B cell (primary cell): ENCODE measurements at regions of chr1 and their contacts with region 1.

Region 1: DNA sequence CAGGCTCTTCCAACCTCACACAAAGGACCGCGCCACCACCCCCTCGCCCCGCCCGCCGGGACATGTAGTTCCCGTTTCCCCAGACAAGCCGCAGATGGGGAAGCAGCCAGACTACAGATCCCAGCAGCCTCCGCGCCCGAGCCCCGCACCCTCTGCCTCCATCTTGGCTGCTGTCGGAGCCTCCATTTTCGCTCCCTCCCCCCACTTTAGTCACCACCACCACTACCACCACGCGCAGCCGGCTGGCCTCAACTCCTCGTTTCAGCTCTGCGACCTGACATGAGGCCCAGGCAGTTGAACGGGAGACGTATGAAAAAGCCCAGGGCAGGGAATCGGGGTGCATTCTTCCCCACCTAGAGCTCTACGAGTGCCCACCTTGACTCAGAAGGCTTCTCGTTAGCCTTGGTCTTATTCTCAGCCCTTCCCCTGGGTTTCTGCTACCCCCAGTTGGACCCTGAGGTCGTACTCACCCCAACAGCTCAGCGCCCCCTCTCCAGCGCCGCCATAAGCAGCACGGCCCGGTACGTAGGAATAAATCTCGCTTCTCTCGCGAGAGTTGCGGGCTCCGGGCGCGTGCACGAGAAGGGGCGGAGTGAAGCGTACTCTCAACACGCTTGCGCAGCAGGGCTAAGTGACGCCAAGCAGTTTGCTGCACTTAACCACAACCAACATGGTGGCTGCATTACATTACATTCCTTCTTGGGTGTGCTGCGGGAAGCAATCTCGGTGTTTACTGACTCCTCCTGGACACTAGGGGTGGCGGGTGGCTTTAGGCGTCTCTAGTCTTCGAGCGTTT is at the start of gene CSDE1:
- DNase-seq: peak; percentile 98
- ATAC-seq: peak; percentile 89
- H3K4me3 ChIP-seq: peak within 1 kb of the TSS; percentile 81 to 100 (median 100)
- H3K4me3 Mint-ChIP-seq: peak within 1 kb of the TSS; percentile 100
- H3K27ac ChIP-seq: peak within 1 kb of the TSS; percentile 99 to 100
- H3K27ac Mint-ChIP-seq: peak within 1 kb of the TSS; percentile 100
- H3K4me1 ChIP-seq: peaks cover 45 to 46% of the 10 kb centered on the region in 2 donors
- H3K4me1 Mint-ChIP-seq: peaks cover 56% of the 10 kb centered on the region
- H3K27me3 ChIP-seq: no peaks in the 10 kb centered on the region
- H3K27me3 Mint-ChIP-seq: no peaks in the 10 kb centered on the region
- CTCF ChIP-seq: no peak
- total RNA-seq, gene CSDE1: 443 and 454 TPM in 2 replicates

Region 2: DNA sequence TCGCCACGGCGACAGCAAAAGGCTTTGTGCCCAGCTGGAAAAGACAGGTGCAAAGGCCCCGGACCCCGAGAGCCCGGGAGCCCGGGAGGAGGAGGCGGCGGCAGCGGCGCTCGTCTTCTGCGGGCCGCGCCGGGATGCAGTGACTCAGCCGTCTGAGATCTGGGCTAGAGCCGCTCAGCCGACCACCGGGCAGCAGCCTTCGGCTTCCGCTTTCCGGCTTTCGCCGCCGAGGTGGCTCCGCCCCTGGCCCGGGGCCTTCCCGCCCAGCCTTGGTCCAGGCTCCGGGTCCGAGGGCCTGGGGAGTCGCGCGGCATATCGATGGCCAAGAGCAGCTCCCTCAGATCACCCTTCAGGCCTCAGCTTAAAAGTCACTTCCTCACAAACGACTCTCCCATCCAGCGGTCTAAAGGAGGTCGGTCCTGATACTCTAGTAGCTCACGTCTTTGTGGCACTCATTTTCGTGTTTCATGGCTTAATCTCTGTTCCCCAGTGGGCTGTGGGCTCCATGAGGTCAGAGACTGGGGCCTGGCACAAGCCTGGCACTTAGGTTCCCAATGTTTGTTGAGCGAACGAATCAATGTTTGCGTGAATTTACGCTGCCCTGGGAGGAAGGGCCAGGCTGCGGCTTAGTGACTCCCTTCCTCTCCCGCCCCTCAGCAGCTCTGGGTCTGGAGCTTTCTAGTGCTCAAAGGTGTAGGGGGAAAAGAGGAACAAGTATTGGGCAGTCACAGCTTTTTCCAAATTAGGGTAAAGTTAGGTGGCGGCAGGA is 998.1 kb before region 1 on chr1 and contains the start of gene PHTF1:
- CTCF ChIA-PET with region 1: no interaction called
- POLR2A ChIA-PET with region 1: no interaction called
- intact Hi-C with region 1: loop called (anchors 2 kb)
- DNase-seq: peak; percentile 80
- ATAC-seq: peak; percentile 84
- H3K4me3 ChIP-seq: peak within 1 kb of the TSS; percentile 76 to 93 (median 92)
- H3K4me3 Mint-ChIP-seq: peak within 1 kb of the TSS; percentile 99
- H3K27ac ChIP-seq: peak within 1 kb of the TSS; percentile 86 to 90
- H3K27ac Mint-ChIP-seq: peak within 1 kb of the TSS; percentile 99
- H3K4me1 ChIP-seq: peaks cover 6 to 20% of the 10 kb centered on the region in 2 donors
- H3K4me1 Mint-ChIP-seq: peaks cover 23% of the 10 kb centered on the region
- H3K27me3 ChIP-seq: no peaks in the 10 kb centered on the region
- H3K27me3 Mint-ChIP-seq: no peaks in the 10 kb centered on the region
- CTCF ChIP-seq: no peak
- total RNA-seq, gene PHTF1: 18.5 and 25.7 TPM in 2 replicates

Region 3: GRCh38 chr1:113874012-113874879 is 883.4 kb before region 1 on chr1:
- CTCF ChIA-PET with region 1: no interaction called
- POLR2A ChIA-PET with region 1: no interaction called
- intact Hi-C with region 1: no loop called
- DNase-seq: peak; percentile 23
- ATAC-seq: no peak
- H3K4me3 ChIP-seq: no peak overlapping the region
- H3K4me3 Mint-ChIP-seq: no peak overlapping the region
- H3K27ac ChIP-seq: peak overlapping the region in 1 of 2 donors; percentile 20
- H3K27ac Mint-ChIP-seq: peak overlapping the region; percentile 28
- H3K4me1 ChIP-seq: peaks cover 34 to 38% of the 10 kb centered on the region in 2 donors
- H3K4me1 Mint-ChIP-seq: peaks cover 45% of the 10 kb centered on the region
- H3K27me3 ChIP-seq: no peaks in the 10 kb centered on the region
- H3K27me3 Mint-ChIP-seq: no peaks in the 10 kb centered on the region
- CTCF ChIP-seq: no peak

Region 4: DNA sequence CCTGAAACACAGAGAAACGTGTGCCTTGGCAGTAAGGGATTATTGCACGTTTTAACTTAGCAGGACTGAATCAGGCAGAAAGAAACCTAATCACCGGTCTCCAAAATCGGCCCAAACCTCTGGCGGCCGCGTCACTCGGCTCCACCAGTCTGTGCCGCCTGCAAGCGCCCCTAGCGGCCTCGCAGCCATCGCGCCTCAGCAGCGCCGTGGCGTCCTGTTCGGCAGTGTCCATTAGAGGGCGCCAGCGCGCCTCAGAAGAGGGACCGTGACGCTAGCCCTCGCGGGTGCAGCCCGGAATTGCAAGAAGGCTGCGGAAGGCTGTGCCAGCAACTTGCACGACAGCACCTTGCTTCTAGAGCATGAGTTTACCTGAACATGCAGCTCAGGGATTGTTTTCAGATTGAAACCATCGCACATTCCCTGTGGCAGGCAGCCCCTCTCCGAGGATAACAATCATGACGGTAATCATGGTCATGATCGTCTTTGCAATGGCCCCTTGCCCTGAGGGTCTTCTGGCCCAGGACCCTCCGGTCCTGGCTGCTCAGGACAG is 411.1 kb before region 1 on chr1:
- CTCF ChIA-PET with region 1: no interaction called
- POLR2A ChIA-PET with region 1: no interaction called
- intact Hi-C with region 1: loop called (anchors 2 kb)
- DNase-seq: peak; percentile 98
- ATAC-seq: peak; percentile 100
- H3K4me3 ChIP-seq: peak overlapping the region; percentile 24 to 61 (median 53)
- H3K4me3 Mint-ChIP-seq: peak overlapping the region; percentile 97
- H3K27ac ChIP-seq: no peak overlapping the region
- H3K27ac Mint-ChIP-seq: peak overlapping the region; percentile 62
- H3K4me1 ChIP-seq: peaks cover 0 to 13% of the 10 kb centered on the region in 2 donors
- H3K4me1 Mint-ChIP-seq: peaks cover 10% of the 10 kb centered on the region
- H3K27me3 ChIP-seq: peaks cover 0 to 3% (median under 1%) of the 10 kb centered on the region in 4 experiments
- H3K27me3 Mint-ChIP-seq: peaks cover 14% of the 10 kb centered on the region
- CTCF ChIP-seq: peak; percentile 100

Region 5: DNA sequence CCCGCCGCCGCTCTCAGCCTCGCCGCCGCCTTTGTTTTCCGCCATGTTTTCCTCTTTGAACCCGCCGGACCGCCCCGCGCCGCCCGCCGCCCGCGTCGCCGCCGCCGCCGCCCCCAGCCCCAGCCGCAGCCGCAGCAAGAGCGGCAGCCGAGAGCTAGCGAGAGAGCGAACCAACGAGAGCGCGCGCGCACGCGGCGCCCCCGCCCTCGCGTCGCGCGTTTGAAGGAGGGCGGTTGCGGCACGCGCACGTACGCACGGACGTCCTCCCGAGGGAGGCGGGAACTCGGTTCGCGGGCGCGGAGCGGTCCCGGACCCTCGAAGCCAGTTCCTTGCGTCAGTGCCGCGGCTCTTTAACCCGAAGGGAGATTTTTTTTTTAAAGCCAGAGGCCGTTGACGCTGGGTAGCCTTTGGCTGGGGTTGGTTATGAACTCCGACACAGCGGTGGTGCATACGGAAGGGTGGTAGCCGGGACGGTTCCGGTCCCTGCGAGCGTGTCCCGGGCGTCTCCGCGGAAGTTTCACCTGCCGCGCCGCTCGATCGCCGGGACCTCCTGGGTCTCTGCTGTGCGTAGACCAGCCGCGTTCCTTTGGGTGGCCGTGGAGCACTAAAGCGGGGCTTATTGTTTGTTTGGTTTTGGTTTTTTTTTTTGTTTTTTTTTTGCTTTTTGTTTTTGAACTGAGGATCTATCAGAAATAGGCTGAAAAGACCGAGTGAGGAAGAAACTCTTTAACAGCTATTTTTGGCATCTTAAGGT is 246.4 kb before region 1 on chr1 and contains the start of gene TRIM33:
- CTCF ChIA-PET with region 1: no interaction called
- POLR2A ChIA-PET with region 1: interaction called, 16 read pairs
- intact Hi-C with region 1: loop called (anchors 1 kb)
- DNase-seq: peak; percentile 97
- ATAC-seq: peak; percentile 75
- H3K4me3 ChIP-seq: peak within 1 kb of the TSS; percentile 67 to 98 (median 95)
- H3K4me3 Mint-ChIP-seq: peak within 1 kb of the TSS; percentile 91
- H3K27ac ChIP-seq: peak within 1 kb of the TSS; percentile 98 to 100
- H3K27ac Mint-ChIP-seq: peak within 1 kb of the TSS; percentile 98
- H3K4me1 ChIP-seq: peaks cover 36 to 41% of the 10 kb centered on the region in 2 donors
- H3K4me1 Mint-ChIP-seq: peaks cover 50% of the 10 kb centered on the region
- H3K27me3 ChIP-seq: no peaks in the 10 kb centered on the region
- H3K27me3 Mint-ChIP-seq: no peaks in the 10 kb centered on the region
- CTCF ChIP-seq: no peak
- total RNA-seq, gene TRIM33: 61.0 and 67.3 TPM in 2 replicates

Region 6: DNA sequence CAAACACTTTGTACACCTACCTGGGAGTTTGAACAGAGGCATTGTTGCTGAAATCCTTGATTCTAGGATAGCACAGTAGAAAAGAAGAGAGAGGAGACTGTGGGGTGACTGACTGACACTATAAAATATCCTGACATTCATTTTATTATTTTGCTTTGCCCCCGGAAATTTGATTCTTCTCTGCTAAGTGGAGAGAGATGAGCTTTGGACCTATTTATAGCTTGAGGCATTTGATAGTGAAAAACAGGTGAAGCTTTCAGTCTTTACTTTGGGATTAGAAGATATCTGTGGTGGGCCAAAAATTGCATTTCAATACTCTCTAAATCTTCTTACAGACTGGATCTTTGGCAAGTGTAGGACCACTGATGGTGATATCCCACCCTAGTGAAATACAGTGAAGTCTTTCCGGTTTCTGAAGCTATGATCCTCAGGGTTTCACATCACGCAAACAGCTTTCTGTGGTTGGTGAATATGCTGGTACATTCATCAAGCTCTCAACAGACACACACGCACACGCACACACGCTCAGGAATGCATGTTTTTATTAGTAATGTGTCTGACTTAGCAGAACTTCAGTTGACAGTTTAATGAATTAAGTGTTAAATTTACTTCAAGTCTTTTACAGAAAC is 62.1 kb before region 1 on chr1 and contains the start of gene AMPD1:
- CTCF ChIA-PET with region 1: no interaction called
- POLR2A ChIA-PET with region 1: no interaction called
- intact Hi-C with region 1: no loop called
- DNase-seq: no peak
- ATAC-seq: no peak
- H3K4me3 ChIP-seq: no peak within 1 kb of the TSS
- H3K4me3 Mint-ChIP-seq: no peak within 1 kb of the TSS
- H3K27ac ChIP-seq: no peak within 1 kb of the TSS
- H3K27ac Mint-ChIP-seq: no peak within 1 kb of the TSS
- H3K4me1 ChIP-seq: no peaks in the 10 kb centered on the region
- H3K4me1 Mint-ChIP-seq: no peaks in the 10 kb centered on the region
- H3K27me3 ChIP-seq: peaks cover 0 to 3% (median 0%) of the 10 kb centered on the region in 4 experiments
- H3K27me3 Mint-ChIP-seq: peaks cover 28% of the 10 kb centered on the region
- CTCF ChIP-seq: no peak
- total RNA-seq, gene AMPD1: not detected in 2 replicates

Region 7: GRCh38 chr1:114716304-114717170 is 41.1 kb before region 1 on chr1 and contains the start of gene NRAS:
- CTCF ChIA-PET with region 1: interaction called, 4 read pairs
- POLR2A ChIA-PET with region 1: interaction called, 5 read pairs
- intact Hi-C with region 1: loop called (anchors 1 kb)
- DNase-seq: peak; percentile 96
- ATAC-seq: peak; percentile 96
- H3K4me3 ChIP-seq: peak within 1 kb of the TSS; percentile 69 to 95 (median 89)
- H3K4me3 Mint-ChIP-seq: peak within 1 kb of the TSS; percentile 99
- H3K27ac ChIP-seq: peak within 1 kb of the TSS; percentile 97
- H3K27ac Mint-ChIP-seq: peak within 1 kb of the TSS; percentile 99
- H3K4me1 ChIP-seq: peaks cover 15 to 16% of the 10 kb centered on the region in 2 donors
- H3K4me1 Mint-ChIP-seq: peaks cover 29% of the 10 kb centered on the region
- H3K27me3 ChIP-seq: no peaks in the 10 kb centered on the region
- H3K27me3 Mint-ChIP-seq: no peaks in the 10 kb centered on the region
- CTCF ChIP-seq: no peak
- total RNA-seq, gene NRAS: 35.0 and 35.3 TPM in 2 replicates

Region 8: DNA sequence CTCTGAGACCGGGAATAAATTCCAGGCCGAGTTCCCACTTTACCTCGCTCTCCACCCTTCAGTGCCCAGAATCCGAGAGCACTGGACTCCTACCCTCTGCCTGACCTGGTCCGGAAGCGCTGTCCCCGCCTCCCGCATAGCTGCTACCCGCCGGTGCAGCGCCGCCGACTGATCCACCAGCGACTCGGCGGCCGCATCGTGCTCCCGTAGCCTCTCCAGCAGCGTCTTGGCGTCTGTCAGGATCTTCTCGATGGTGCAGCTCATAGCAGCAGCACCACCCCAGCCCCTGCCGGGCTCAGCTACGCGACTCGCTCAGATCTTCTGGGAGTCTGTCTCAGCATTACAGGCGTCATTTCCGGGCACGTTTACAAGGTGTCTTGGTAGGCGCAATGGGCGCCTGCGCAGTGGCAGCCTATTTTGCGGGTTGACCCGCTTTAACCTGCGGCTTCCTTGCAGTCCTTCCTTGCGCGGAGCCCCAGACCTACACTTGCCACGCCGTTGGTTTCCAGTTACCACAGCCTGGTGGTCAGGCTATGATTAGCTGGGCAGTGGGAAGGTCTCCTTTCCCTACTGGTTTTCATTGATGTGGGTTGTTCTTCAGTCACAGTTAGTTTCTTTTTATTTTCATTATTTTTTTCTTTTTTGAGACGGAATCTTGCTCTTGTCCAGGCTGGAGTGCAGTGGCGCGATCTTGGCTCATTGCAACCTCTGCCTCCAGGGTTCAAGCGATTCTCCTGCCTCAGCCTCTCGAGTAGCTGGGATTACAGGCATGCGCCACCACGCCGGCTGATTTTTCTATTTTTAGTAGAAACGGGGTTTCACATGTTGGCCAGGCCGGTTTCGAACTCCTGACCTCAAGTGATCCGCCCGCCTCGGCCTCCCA is 22.9 kb after region 1 on chr1 and contains the start of gene SIKE1:
- CTCF ChIA-PET with region 1: interaction called, 3 read pairs
- POLR2A ChIA-PET with region 1: interaction called, 6 read pairs
- intact Hi-C with region 1: loop called (anchors 1 kb)
- DNase-seq: peak; percentile 94
- ATAC-seq: peak; percentile 97
- H3K4me3 ChIP-seq: peak within 1 kb of the TSS; percentile 94 to 99 (median 96)
- H3K4me3 Mint-ChIP-seq: peak within 1 kb of the TSS; percentile 100
- H3K27ac ChIP-seq: peak within 1 kb of the TSS; percentile 75 to 84
- H3K27ac Mint-ChIP-seq: peak within 1 kb of the TSS; percentile 98
- H3K4me1 ChIP-seq: peaks cover 9 to 10% of the 10 kb centered on the region in 2 donors
- H3K4me1 Mint-ChIP-seq: peaks cover 26% of the 10 kb centered on the region
- H3K27me3 ChIP-seq: no peaks in the 10 kb centered on the region
- H3K27me3 Mint-ChIP-seq: peaks cover 9% of the 10 kb centered on the region
- CTCF ChIP-seq: no peak
- total RNA-seq, gene SIKE1: 44.8 and 47.8 TPM in 2 replicates

Region 9: GRCh38 chr1:115098979-115099692 is 341.5 kb after region 1 on chr1:
- CTCF ChIA-PET with region 1: no interaction called
- POLR2A ChIA-PET with region 1: no interaction called
- intact Hi-C with region 1: loop called (anchors 5 kb)
- DNase-seq: peak; percentile 83
- ATAC-seq: peak; percentile 82
- H3K4me3 ChIP-seq: peak overlapping the region; percentile 52 to 89 (median 58)
- H3K4me3 Mint-ChIP-seq: peak overlapping the region; percentile 92
- H3K27ac ChIP-seq: peak overlapping the region; percentile 97 to 98
- H3K27ac Mint-ChIP-seq: peak overlapping the region; percentile 97
- H3K4me1 ChIP-seq: peaks cover 15 to 20% of the 10 kb centered on the region in 2 donors
- H3K4me1 Mint-ChIP-seq: peaks cover 28% of the 10 kb centered on the region
- H3K27me3 ChIP-seq: no peaks in the 10 kb centered on the region
- H3K27me3 Mint-ChIP-seq: no peaks in the 10 kb centered on the region
- CTCF ChIP-seq: no peak